H1 (cell line): ENCODE measurements at regions of chr17 and their contacts with region 1.

Region 1: DNA sequence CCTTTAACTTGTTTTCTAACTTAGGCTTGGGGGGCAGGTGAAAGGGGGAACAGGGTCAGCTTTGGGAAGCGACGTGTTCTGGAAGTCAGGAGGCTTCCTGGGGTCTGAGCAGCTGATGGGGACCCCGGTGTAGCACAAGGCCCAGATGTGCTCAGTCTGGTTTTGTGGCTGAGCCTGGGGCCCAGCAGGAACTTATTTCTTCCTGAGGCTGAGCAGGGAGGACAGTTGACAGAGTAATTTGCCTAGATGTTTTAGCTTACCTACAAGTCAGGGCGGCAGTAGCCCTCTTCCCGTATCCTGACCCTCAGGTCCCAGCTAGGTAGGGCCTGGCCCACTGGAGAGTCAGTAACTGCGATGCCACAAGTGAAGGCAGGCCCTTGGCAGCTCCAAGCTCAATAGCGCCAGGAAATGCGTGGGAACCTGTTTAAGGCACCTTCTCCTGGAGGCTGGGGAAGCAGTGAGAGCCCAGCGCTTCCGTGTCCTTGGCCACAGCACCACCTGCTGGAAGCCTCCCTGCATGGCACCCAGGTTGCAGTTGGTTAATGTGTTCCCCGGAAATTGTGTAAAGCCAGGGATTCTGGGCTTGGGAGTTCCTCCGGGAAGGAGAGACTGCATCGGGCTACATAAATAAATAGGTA is 5.2 kb downstream of the CCR7 start:
- DNase-seq: peak; percentile 79 to 98
- H3K4me3 ChIP-seq: no peak overlapping the region
- H3K27ac ChIP-seq: no peak overlapping the region
- H3K4me1 ChIP-seq: peaks cover 0 to 5% (median 2%) of the 10 kb centered on the region in 4 experiments; a peak in 5 of 7 replicates
- H3K27me3 ChIP-seq: no peaks in the 10 kb centered on the region; a peak in 1 of 7 replicates
- CTCF ChIP-seq: peak; percentile 97 to 99 (median 97)
- EP300 ChIP-seq: no peak
- POLR2A ChIP-seq: no peak
- RAD21 ChIP-seq: peak; percentile 98 to 99

Region 2: GRCh38 chr17:40355123-40355803 is 204.8 kb before region 1 on chr17:
- CTCF ChIA-PET with region 1: interaction called, 18 read pairs
- POLR2A ChIA-PET with region 1: no interaction called
- DNase-seq: peak in 1 of 2 experiments; percentile 100
- H3K4me3 ChIP-seq: no peak overlapping the region
- H3K27ac ChIP-seq: no peak overlapping the region
- H3K4me1 ChIP-seq: peaks cover 0 to 20% (median 12%) of the 10 kb centered on the region in 4 experiments; a peak in 6 of 7 replicates
- H3K27me3 ChIP-seq: 0 out of 7 replicates have a peak, but pooled peaks cover 0 to 2% (median 0%) of the 10 kb centered on the region in 4 experiments
- CTCF ChIP-seq: peak; percentile 98 to 99 (median 98)
- EP300 ChIP-seq: peak in 1 of 2 experiments; percentile 21; a peak in 1 of 3 replicates
- POLR2A ChIP-seq: no peak
- RAD21 ChIP-seq: peak; percentile 100

Region 3: GRCh38 chr17:40443583-40444327 is 116.3 kb before region 1 on chr17:
- CTCF ChIA-PET with region 1: interaction called, 16 read pairs
- POLR2A ChIA-PET with region 1: interaction called, 3 read pairs
- DNase-seq: peak in 1 of 2 experiments; percentile 85
- H3K4me3 ChIP-seq: peak overlapping the region; percentile 36 to 68 (median 64)
- H3K27ac ChIP-seq: peak overlapping the region; percentile 30; the same call in 1 of the 2 replicates
- H3K4me1 ChIP-seq: peaks cover 5 to 24% (median 13%) of the 10 kb centered on the region in 4 experiments
- H3K27me3 ChIP-seq: peaks cover 0 to 4% (median 0%) of the 10 kb centered on the region in 4 experiments; a peak in 3 of 7 replicates
- CTCF ChIP-seq: peak; percentile 46 to 58 (median 57)
- EP300 ChIP-seq: no peak
- POLR2A ChIP-seq: no peak
- RAD21 ChIP-seq: peak; percentile 28 to 52; a peak in 3 of 4 replicates

Region 4: DNA sequence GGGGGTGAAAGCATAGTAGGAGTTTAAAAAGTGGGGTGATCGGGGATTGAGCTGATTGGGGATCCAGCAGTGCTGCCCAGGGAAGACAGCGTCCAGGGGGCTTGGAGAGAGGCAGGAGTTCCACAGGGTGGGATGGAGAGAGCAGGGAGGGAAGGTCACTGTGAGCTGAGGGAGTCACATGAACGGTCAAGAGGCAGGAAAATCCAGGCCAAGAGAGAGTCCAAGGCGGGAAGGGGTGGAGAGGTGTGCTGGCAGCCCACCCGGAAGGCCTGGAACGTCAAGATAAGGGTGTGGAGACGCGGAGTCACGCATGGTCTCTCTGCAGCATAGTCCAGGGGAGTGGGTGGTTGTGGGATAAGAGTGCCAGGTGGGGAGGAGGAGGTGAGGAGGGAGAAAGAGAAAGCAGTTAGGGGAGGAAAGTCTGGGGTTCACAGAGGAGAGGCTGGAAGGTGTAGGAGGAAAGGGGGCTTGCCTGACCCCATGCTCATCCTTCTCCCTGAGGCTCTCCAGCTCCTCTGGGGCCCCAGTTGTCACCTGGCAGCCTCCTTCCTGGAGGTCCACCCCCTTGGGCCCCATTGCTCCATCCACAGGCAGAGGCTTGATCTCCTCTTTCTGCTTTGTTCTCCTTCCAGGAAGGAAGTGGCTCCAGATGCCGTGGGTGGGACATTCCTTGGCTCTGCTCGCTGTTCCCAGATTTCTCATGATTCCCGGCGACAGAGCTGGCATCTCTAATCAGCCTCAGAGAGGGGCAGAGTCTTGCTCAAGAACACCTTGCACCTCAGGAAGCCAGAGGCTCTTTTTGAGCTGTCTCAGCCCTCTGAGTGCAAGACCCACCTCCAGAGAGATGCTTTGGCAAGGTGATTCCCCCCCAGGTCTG is 23.5 kb before region 1 on chr17:
- CTCF ChIA-PET with region 1: interaction called, 100 read pairs
- POLR2A ChIA-PET with region 1: no interaction called
- DNase-seq: no peak
- H3K4me3 ChIP-seq: no peak overlapping the region
- H3K27ac ChIP-seq: no peak overlapping the region
- H3K4me1 ChIP-seq: peaks cover 0 to 8% (median 1%) of the 10 kb centered on the region in 4 experiments; a peak in 2 of 7 replicates
- H3K27me3 ChIP-seq: no peaks in the 10 kb centered on the region; a peak in 1 of 7 replicates
- CTCF ChIP-seq: no peak
- EP300 ChIP-seq: no peak
- POLR2A ChIP-seq: no peak
- RAD21 ChIP-seq: no peak

Region 5: DNA sequence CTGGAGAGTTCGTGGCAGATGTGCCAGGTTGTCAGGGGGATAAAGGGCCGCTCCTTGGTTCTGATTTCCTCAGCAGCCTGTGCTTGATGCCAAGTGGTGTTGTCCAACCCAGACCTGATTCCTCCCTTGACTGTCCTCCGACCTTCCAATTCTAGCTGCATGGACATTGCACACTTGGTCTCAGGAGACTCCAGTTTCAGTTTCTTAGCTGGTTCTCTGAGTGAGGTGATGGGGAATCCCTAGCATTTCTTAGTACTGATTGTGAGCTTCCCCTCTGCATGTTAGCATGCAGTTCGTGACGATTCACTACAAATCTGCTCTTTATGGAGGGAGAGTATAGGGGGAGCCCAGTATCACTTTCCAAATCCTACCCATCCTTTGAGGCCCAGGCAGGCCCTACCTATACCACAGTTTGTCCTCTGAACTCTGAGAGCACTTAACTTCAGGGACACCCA is 17.6 kb after region 1 on chr17:
- CTCF ChIA-PET with region 1: interaction called, 19 read pairs
- POLR2A ChIA-PET with region 1: interaction called, 3 read pairs
- DNase-seq: no peak
- H3K4me3 ChIP-seq: no peak overlapping the region
- H3K27ac ChIP-seq: no peak overlapping the region
- H3K4me1 ChIP-seq: no peaks in the 10 kb centered on the region
- H3K27me3 ChIP-seq: no peaks in the 10 kb centered on the region
- CTCF ChIP-seq: no peak
- EP300 ChIP-seq: no peak
- POLR2A ChIP-seq: no peak
- RAD21 ChIP-seq: no peak